ENCODE measurements at regions of chr17 and their contacts with region 1.

Region 1: GRCh38 chr17:40026816-40027613 is 11.8 kb downstream of the CSF3 start:
- DNase-seq: peak; percentile 76
- H3K4me3 ChIP-seq: no peak overlapping the region
- H3K27ac ChIP-seq: peak overlapping the region; percentile 87
- H3K4me1 ChIP-seq: peaks cover 60% of the 10 kb centered on the region
- H3K27me3 ChIP-seq: no peaks in the 10 kb centered on the region
- CTCF ChIP-seq: peak; percentile 77 to 91

Region 2: DNA sequence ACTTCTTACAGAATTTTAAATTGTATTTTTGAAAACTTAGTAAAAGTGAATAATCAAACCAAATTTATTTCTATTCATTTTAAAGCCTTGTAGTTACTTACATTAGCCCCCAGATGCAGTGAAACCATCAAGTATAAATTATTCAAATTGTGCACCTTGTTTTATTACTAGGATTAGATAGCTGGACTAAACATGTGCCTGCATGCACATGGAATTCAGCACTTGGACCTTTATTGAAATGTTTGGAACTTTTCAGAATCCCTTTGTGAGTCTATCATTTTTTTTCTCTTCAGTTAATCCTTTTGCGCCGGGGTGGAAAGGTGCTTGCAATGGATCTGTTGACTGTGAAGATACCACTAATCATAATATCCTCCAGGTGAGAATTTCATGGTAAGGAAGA is 154.3 kb before region 1 on chr17:
- CTCF ChIA-PET with region 1: no interaction called
- dilution Hi-C with region 1: no loop called
- in situ Hi-C with region 1: no loop called
- intact Hi-C with region 1: loop called (anchors 1 kb)
- DNase-seq: peak; percentile 32
- H3K4me3 ChIP-seq: no peak overlapping the region
- H3K27ac ChIP-seq: no peak overlapping the region
- H3K4me1 ChIP-seq: peaks cover 5% of the 10 kb centered on the region
- H3K27me3 ChIP-seq: peaks cover 8% of the 10 kb centered on the region
- CTCF ChIP-seq: peak; percentile 51 to 62

Region 3: GRCh38 chr17:39963829-39964228 is 63.2 kb before region 1 on chr17:
- CTCF ChIA-PET with region 1: no interaction called
- dilution Hi-C with region 1: no loop called
- in situ Hi-C with region 1: no loop called
- intact Hi-C with region 1: loop called (anchors 1 kb)
- DNase-seq: peak; percentile 93
- H3K4me3 ChIP-seq: no peak overlapping the region
- H3K27ac ChIP-seq: no peak overlapping the region
- H3K4me1 ChIP-seq: peaks cover 25% of the 10 kb centered on the region
- H3K27me3 ChIP-seq: no peaks in the 10 kb centered on the region
- CTCF ChIP-seq: no peak

Region 4: DNA sequence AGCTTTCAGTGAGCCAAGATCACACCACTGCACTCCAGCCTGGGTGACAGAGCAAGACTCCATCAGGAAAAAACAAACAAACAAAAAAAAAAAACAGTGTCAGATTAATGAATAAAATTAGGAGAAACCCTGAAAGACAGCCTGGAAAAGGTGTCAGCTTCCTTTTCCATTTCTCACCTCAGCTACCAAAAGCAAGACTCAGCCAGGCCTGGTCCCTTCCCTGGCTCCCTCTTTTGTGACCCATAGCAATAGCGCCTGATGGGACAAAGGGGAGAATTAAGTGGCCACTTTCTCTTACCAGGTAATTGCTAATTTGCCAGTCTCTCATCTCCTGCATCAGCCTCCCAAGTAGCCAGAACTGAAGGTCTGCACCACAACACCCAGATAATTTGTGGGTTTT is 31.9 kb after region 1 on chr17:
- CTCF ChIA-PET with region 1: no interaction called
- dilution Hi-C with region 1: no loop called
- in situ Hi-C with region 1: no loop called
- intact Hi-C with region 1: no loop called
- DNase-seq: no peak
- H3K4me3 ChIP-seq: no peak overlapping the region
- H3K27ac ChIP-seq: no peak overlapping the region
- H3K4me1 ChIP-seq: peaks cover 6% of the 10 kb centered on the region
- H3K27me3 ChIP-seq: no peaks in the 10 kb centered on the region
- CTCF ChIP-seq: no peak

Region 5: GRCh38 chr17:40086150-40087044 is 59.4 kb after region 1 on chr17:
- CTCF ChIA-PET with region 1: no interaction called
- dilution Hi-C with region 1: no loop called
- in situ Hi-C with region 1: loop called in 1 of 2 experiments (anchors 10 kb)
- intact Hi-C with region 1: no loop called
- DNase-seq: no peak
- H3K4me3 ChIP-seq: no peak overlapping the region
- H3K27ac ChIP-seq: no peak overlapping the region
- H3K4me1 ChIP-seq: no peaks in the 10 kb centered on the region
- H3K27me3 ChIP-seq: no peaks in the 10 kb centered on the region
- CTCF ChIP-seq: peak; percentile 54 to 87

Region 6: GRCh38 chr17:40168262-40168832 is 141.3 kb after region 1 on chr17:
- CTCF ChIA-PET with region 1: no interaction called
- dilution Hi-C with region 1: no loop called
- in situ Hi-C with region 1: no loop called
- intact Hi-C with region 1: loop called (anchors 2 kb)
- DNase-seq: peak; percentile 49
- H3K4me3 ChIP-seq: no peak overlapping the region
- H3K27ac ChIP-seq: no peak overlapping the region
- H3K4me1 ChIP-seq: peaks cover 3% of the 10 kb centered on the region
- H3K27me3 ChIP-seq: no peaks in the 10 kb centered on the region
- CTCF ChIP-seq: peak; percentile 75 to 80